Spleen (tissue), 13 donors: ENCODE measurements at regions of chr12 and their contacts with region 1.

Region 1: GRCh38 chr12:52980693-52981423 is 25.4 kb upstream of the EIF4B start:
- DNase-seq: peak; percentile 89
- H3K4me3 ChIP-seq: no peak overlapping the region
- H3K27ac ChIP-seq: no peak overlapping the region
- H3K4me1 ChIP-seq: peaks cover 0 to 17% (median 10%) of the 10 kb centered on the region in 6 donors
- H3K27me3 ChIP-seq: peaks cover 0 to 37% (median 0%) of the 10 kb centered on the region in 7 donors
- CTCF ChIP-seq: peak; percentile 94 to 99 (median 96)
- POLR2A ChIP-seq: no peak

Region 2: GRCh38 chr12:52156736-52157565 is 823.9 kb before region 1 on chr12:
- intact Hi-C with region 1: loop called (anchors 10 kb)
- DNase-seq: peak; percentile 89
- H3K4me3 ChIP-seq: no peak overlapping the region
- H3K27ac ChIP-seq: no peak overlapping the region
- H3K4me1 ChIP-seq: peaks cover 2 to 10% (median 7%) of the 10 kb centered on the region in 6 donors
- H3K27me3 ChIP-seq: peaks cover 0 to 15% (median 7%) of the 10 kb centered on the region in 7 donors
- CTCF ChIP-seq: peak; percentile 70 to 95 (median 90)
- POLR2A ChIP-seq: no peak

Region 3: DNA sequence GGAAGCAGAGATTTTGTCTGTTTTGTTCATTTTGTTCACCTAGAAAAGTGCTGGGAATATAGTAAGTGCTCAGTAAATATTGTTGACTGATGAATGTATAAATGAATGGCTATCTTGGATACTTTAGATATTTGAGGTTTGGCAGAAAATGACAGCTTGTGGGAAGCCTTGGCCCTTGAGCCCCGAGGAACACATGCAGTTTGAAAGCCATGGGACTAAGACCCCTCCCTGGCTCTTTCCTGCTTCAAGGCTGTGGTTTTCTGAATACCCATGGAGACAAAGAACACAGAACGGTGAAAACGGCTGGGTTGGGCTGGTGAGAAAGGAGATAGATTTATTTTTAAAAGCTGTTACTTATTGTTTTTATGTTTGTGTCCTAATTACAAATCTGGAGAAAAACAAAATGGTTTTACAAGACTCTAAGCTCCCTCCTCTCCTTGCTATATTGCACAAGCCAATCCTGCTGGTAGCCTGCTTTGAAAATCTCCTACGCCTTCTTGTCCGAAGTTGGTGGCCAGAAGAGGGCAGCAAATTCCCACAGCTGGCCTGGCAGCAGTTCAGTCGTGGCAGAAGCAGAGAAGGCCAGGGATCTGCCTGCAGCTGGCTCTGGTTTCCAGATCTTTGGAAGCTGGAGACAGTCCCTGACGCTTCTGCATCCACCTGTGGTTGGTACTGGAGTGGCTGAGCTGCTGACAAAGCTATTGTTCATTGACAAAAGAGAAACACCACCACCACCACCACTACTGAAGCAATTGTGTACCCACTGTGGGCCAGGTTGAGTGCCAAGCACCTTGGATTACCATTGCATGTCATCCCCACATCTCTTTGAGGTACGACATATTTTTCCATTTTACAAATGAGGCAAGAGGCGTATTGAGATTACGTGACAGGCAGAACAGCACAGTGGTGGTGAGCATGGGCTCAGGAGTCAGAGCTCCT is 608.4 kb before region 1 on chr12:
- intact Hi-C with region 1: loop called (anchors 10 kb)
- DNase-seq: peak; percentile 82
- H3K4me3 ChIP-seq: no peak overlapping the region
- H3K27ac ChIP-seq: peak overlapping the region in 2 of 8 donors; percentile 43 to 46
- H3K4me1 ChIP-seq: peaks cover 0 to 12% (median 0%) of the 10 kb centered on the region in 6 donors
- H3K27me3 ChIP-seq: peaks cover 0 to 25% (median 0%) of the 10 kb centered on the region in 7 donors
- CTCF ChIP-seq: peak; percentile 36 to 78 (median 66)
- POLR2A ChIP-seq: no peak

Region 4: DNA sequence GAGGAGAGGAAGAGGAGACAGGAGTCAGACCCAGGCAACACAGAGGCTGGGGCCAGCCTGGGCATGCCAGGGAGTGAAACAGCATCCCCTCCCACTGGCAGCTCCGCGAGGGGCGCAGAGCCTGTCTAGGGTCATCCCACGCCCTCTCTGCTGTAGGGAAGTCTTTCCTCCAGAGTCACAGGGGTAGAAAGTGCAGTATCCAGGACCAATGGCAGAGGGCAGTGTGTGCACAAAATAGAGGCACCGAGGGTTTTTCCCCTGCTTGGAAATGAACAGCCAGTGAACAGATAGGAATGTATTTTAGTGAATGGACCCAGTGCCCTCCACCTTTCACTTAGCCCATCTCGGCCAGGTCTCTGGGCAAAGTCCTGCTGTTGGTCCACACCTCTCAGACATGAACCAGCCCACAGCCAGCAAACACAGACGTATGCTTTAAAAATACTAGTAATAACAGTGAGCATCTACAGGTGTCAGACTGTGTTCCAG is 397.8 kb before region 1 on chr12:
- intact Hi-C with region 1: loop called (anchors 10 kb)
- DNase-seq: peak; percentile 71
- H3K4me3 ChIP-seq: no peak overlapping the region
- H3K27ac ChIP-seq: no peak overlapping the region
- H3K4me1 ChIP-seq: peaks cover 0 to 8% (median 0%) of the 10 kb centered on the region in 6 donors
- H3K27me3 ChIP-seq: peaks cover 0 to 24% (median 0%) of the 10 kb centered on the region in 7 donors
- CTCF ChIP-seq: peak in 10 of 11 experiments; percentile 31 to 77 (median 60)
- POLR2A ChIP-seq: no peak

Region 5: DNA sequence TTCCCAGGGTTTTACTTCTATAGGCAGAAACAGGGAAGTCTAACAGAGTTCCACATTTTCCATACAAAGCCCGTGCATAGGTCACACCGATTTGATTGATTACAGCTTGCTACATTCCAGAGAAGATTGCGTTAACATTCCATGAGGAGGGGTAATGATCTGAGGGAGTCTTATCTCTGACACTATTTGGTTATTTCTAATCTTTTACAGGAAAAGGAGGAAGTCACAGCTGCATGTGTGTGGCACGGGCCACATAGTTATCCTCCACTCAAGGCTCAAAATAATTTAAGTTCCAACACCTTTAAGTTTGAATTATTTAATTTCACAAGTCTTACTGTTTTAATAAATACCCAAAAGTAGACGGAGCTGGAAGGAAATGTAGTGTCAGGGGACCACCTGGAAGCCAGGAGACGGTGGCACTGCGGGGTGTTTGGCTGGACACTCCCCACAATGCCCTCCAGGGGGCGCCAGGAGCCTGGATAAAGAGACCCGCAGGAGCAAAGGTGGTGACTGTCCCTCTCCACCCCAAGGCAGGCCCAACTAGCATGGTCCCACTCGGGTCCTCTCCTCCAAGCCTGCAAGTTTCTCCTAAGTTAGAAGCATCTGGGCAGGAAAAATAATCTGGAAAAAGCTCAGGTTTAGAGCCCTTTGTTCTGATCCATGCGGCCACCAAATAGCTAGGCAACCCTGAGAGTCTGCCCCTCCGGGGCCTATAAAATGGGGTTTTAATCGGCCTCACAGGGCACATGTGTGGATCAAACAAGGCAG is 96.1 kb before region 1 on chr12:
- intact Hi-C with region 1: loop called (anchors 2 kb)
- DNase-seq: peak; percentile 91
- H3K4me3 ChIP-seq: no peak overlapping the region
- H3K27ac ChIP-seq: no peak overlapping the region
- H3K4me1 ChIP-seq: peaks cover 0 to 16% (median 9%) of the 10 kb centered on the region in 6 donors
- H3K27me3 ChIP-seq: peaks cover 0 to 48% (median 0%) of the 10 kb centered on the region in 7 donors
- CTCF ChIP-seq: peak; percentile 74 to 94 (median 88)
- POLR2A ChIP-seq: no peak